ENCODE measurements at regions of chr12 and their contacts with region 1.

Region 1: GRCh38 chr12:122471324-122472226 is 29.2 kb downstream of the ZCCHC8 start:
- DNase-seq: no peak
- ATAC-seq: peak in 2 of 4 donors; percentile 51 to 52
- H3K4me3 ChIP-seq: no peak overlapping the region
- H3K27ac ChIP-seq: peak overlapping the region in 7 of 12 donors; percentile 6 to 59 (median 20)
- H3K4me1 ChIP-seq: peaks cover 0 to 9% (median 5%) of the 10 kb centered on the region in 12 donors
- H3K27me3 ChIP-seq: no peaks in the 10 kb centered on the region
- CTCF ChIP-seq: peak; percentile 58 to 87 (median 78)
- POLR2A ChIP-seq: no peak

Region 2: GRCh38 chr12:122336015-122336946 is 135.3 kb before region 1 on chr12:
- intact Hi-C with region 1: loop called in 2 of 10 experiments (anchors 10 kb)
- DNase-seq: no peak
- ATAC-seq: no peak
- H3K4me3 ChIP-seq: no peak overlapping the region
- H3K27ac ChIP-seq: no peak overlapping the region
- H3K4me1 ChIP-seq: no peaks in the 10 kb centered on the region
- H3K27me3 ChIP-seq: no peaks in the 10 kb centered on the region
- CTCF ChIP-seq: peak; percentile 32 to 64 (median 54)
- POLR2A ChIP-seq: no peak

Region 3: DNA sequence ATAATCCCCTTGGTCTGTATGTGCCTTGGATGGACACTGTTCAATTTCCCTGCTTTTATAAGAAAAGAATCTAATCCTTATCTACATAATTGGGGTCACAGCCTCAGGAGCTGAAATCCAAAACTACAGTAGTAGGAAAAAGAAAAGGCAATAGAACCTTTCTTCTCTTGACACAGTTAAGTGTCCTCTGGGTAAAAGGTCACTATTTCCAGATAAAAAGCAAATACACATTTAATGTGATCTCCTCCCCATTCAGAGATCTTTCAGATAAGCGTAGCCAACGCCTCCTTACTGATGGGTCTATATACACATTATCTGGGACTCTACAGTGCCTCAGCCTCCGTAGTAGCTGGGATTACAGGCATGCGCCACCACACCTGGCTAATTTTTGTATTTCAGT is 122.5 kb before region 1 on chr12:
- intact Hi-C with region 1: loop called in 1 of 10 experiments (anchors 10 kb)
- DNase-seq: no peak
- ATAC-seq: no peak
- H3K4me3 ChIP-seq: no peak overlapping the region
- H3K27ac ChIP-seq: no peak overlapping the region
- H3K4me1 ChIP-seq: peaks cover 0 to 17% (median 12%) of the 10 kb centered on the region in 12 donors
- H3K27me3 ChIP-seq: no peaks in the 10 kb centered on the region
- CTCF ChIP-seq: no peak
- POLR2A ChIP-seq: no peak

Region 4: DNA sequence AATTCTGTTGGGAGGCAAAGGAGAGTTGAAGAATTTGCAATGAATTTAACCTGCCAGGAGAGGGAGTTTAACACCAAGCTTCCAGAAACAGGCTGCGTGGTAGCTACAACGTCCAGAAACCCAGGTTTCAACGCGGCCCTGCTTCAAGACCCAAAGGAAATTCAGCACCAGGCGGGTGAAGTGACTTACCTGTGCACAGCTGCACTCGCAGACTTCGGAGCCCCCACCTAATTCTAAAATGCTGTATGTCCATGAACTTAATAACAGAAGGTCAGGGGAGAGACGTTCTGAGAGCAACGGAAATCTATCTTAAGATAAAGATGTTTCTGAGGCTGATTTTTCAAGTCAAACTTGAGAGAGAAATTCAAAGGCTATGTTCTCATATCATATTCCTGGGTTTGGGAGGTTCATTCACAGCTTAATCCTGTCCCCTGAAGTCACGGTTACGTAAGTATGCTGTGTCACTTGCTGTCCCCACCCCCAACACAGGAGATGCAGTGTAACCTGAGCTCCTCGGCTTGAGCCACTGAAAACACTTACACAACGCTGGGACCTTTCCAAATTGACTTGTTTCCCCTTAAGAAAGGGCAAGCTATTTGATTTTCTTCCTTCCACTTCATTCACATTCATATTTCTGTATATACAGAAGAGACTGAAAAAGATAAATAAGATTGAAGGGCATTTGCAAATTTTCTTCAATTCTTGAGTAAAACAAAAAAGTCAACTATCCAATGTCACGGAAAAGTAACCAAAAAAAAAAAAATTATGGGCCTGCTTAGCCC is 71.8 kb before region 1 on chr12:
- intact Hi-C with region 1: loop called (anchors 1 to 5 kb)
- DNase-seq: peak in 4 of 5 donors; percentile 61 to 75 (median 66)
- ATAC-seq: peak; percentile 84 to 92 (median 86)
- H3K4me3 ChIP-seq: peak overlapping the region in 9 of 12 donors; percentile 3 to 43 (median 25)
- H3K27ac ChIP-seq: peak overlapping the region; percentile 69 to 93 (median 86)
- H3K4me1 ChIP-seq: peaks cover 0 to 64% (median 17%) of the 10 kb centered on the region in 12 donors
- H3K27me3 ChIP-seq: no peaks in the 10 kb centered on the region
- CTCF ChIP-seq: peak; percentile 47 to 75 (median 66)
- POLR2A ChIP-seq: no peak

Region 5: GRCh38 chr12:122427412-122427811 is 44.2 kb before region 1 on chr12:
- intact Hi-C with region 1: loop called in 1 of 10 experiments (anchors 5 kb)
- DNase-seq: no peak
- ATAC-seq: no peak
- H3K4me3 ChIP-seq: no peak overlapping the region
- H3K27ac ChIP-seq: no peak overlapping the region
- H3K4me1 ChIP-seq: peaks cover 0 to 13% (median 8%) of the 10 kb centered on the region in 12 donors
- H3K27me3 ChIP-seq: no peaks in the 10 kb centered on the region
- CTCF ChIP-seq: no peak
- POLR2A ChIP-seq: no peak

Region 6: DNA sequence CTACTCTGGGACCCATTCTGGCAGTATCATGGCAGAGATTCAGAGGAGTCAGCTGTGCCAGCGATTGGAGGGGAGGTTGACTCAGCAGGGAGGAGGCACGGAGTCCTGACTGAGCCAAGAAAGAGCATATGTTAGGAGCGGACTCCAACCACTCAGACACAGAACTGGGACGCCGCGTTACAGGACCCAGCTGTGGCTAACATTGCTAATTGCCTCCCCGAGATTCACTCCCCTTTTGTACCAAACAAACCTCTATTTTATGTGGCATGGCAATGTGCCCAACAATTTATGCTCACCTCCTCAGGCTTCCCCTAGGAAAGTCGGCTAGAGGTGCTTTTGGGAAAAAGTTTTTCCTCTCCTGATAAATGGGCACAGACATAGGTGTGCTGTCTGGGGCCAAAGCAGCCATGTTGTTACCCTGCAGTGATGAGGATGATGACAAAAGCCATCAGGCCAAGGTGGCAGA is 33.9 kb before region 1 on chr12:
- intact Hi-C with region 1: no loop called
- DNase-seq: peak; percentile 11 to 74 (median 62)
- ATAC-seq: peak; percentile 68 to 99 (median 82)
- H3K4me3 ChIP-seq: no peak overlapping the region
- H3K27ac ChIP-seq: peak overlapping the region in 1 of 12 donors; percentile 47
- H3K4me1 ChIP-seq: peaks cover 0 to 4% (median 0%) of the 10 kb centered on the region in 12 donors
- H3K27me3 ChIP-seq: no peaks in the 10 kb centered on the region
- CTCF ChIP-seq: no peak
- POLR2A ChIP-seq: no peak

Region 7: GRCh38 chr12:122813310-122813713 is 341.7 kb after region 1 on chr12:
- intact Hi-C with region 1: no loop called
- DNase-seq: no peak
- ATAC-seq: no peak
- H3K4me3 ChIP-seq: no peak overlapping the region
- H3K27ac ChIP-seq: no peak overlapping the region
- H3K4me1 ChIP-seq: no peaks in the 10 kb centered on the region
- H3K27me3 ChIP-seq: no peaks in the 10 kb centered on the region
- CTCF ChIP-seq: no peak
- POLR2A ChIP-seq: no peak